ENCODE measurements at regions of chr11 and their contacts with region 1.

Region 1: DNA sequence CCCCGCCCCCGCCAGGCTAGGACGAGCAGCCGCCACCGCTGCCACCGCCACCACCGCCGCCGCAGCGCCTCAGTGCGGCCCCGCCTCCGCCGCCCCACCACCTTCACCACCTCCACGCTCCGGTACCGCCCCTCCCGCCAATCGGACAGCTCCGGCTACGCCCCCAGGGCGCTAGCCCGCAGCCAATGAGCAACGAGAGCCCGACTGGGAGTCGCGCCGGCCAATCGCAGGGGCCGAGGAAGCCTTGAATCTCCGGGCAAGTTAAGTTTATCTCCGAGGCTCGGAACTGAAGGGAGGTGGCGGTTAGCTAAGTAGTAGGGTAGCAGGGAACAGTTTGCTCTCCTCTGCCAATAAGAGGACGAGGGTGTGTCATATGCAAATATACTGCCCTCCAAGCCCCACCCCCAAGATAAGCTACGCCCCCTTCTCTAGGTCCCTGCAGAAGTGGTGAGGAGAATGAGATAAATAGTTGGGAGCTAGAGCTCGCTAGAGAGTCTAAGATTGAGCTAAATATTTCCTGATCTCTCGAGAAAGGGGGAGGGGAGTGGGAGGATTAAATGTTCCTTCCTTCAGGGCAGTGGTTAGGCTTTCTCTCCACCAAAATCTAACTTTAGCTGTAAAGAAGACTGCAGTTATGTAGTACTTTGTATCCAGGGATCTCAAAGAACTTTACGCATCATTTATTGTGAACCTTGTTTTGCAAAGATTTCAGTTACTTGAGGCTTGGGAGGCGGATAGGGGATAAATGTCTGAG is at the start of gene SESN3:
- DNase-seq: peak; percentile 96 to 99 (median 98)
- ATAC-seq: peak; percentile 88
- H3K4me3 ChIP-seq: peak within 1 kb of the TSS; percentile 82
- H3K4me3 Mint-ChIP-seq: peak within 1 kb of the TSS; percentile 98
- H3K27ac ChIP-seq: peak within 1 kb of the TSS; percentile 69 to 82
- H3K27ac Mint-ChIP-seq: peak within 1 kb of the TSS; percentile 89
- H3K4me1 ChIP-seq: peaks cover 16% of the 10 kb centered on the region
- H3K4me1 Mint-ChIP-seq: peaks cover 47% of the 10 kb centered on the region
- H3K27me3 ChIP-seq: no peaks in the 10 kb centered on the region
- H3K27me3 Mint-ChIP-seq: no peaks in the 10 kb centered on the region
- CTCF ChIP-seq: no peak
- total RNA-seq, gene SESN3: 63.9 to 69.1 TPM

Region 2: DNA sequence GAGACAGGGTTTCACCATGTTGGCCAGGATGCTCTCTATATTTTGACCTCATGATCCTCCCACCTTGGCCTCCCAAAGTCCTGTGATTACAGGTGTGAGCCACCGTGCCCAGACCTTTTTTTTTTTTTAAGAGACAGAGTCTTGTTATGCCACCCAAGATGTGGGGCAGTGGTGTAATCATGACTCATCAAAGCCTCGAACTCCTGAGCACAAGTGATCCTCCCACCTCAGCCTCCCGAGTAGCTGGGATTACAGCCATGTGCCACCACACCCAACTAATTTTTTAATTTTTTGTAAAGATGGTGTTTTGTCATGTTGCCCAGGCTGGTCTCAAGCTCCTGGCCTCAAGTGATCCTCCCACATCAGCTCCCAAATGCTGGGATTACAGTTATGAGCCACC is 889.1 kb before region 1 on chr11:
- CTCF ChIA-PET with region 1: no interaction called
- POLR2A ChIA-PET with region 1: no interaction called
- intact Hi-C with region 1: no loop called
- DNase-seq: no peak
- ATAC-seq: no peak
- H3K4me3 ChIP-seq: no peak overlapping the region
- H3K4me3 Mint-ChIP-seq: no peak overlapping the region
- H3K27ac ChIP-seq: no peak overlapping the region
- H3K27ac Mint-ChIP-seq: no peak overlapping the region
- H3K4me1 ChIP-seq: no peaks in the 10 kb centered on the region
- H3K4me1 Mint-ChIP-seq: no peaks in the 10 kb centered on the region
- H3K27me3 ChIP-seq: peaks cover 0 to 4% of the 10 kb centered on the region in 2 experiments
- H3K27me3 Mint-ChIP-seq: peaks cover 11% of the 10 kb centered on the region
- CTCF ChIP-seq: no peak

Region 3: DNA sequence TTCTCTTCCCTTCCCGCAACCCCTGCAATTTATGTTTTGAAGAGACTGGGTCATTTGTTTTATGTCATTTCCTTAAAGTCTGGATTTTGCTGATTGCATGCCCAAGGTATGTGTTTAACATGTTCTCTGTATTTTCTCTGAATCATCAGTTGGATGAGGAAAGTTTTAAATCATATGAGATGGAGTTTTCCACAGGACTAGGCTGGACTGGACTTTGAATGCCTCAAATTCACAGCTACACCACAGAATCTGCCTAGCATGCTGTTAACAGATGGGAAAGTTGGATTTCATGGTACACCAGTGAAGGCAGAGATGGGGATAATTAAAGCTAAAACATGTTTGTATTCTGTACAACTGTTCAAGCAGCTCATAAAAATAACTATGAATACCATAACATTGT is 320.5 kb before region 1 on chr11:
- CTCF ChIA-PET with region 1: no interaction called
- POLR2A ChIA-PET with region 1: no interaction called
- intact Hi-C with region 1: no loop called
- DNase-seq: no peak
- ATAC-seq: no peak
- H3K4me3 ChIP-seq: no peak overlapping the region
- H3K4me3 Mint-ChIP-seq: no peak overlapping the region
- H3K27ac ChIP-seq: no peak overlapping the region
- H3K27ac Mint-ChIP-seq: no peak overlapping the region
- H3K4me1 ChIP-seq: no peaks in the 10 kb centered on the region
- H3K4me1 Mint-ChIP-seq: no peaks in the 10 kb centered on the region
- H3K27me3 ChIP-seq: no peaks in the 10 kb centered on the region
- H3K27me3 Mint-ChIP-seq: no peaks in the 10 kb centered on the region
- CTCF ChIP-seq: no peak

Region 4: DNA sequence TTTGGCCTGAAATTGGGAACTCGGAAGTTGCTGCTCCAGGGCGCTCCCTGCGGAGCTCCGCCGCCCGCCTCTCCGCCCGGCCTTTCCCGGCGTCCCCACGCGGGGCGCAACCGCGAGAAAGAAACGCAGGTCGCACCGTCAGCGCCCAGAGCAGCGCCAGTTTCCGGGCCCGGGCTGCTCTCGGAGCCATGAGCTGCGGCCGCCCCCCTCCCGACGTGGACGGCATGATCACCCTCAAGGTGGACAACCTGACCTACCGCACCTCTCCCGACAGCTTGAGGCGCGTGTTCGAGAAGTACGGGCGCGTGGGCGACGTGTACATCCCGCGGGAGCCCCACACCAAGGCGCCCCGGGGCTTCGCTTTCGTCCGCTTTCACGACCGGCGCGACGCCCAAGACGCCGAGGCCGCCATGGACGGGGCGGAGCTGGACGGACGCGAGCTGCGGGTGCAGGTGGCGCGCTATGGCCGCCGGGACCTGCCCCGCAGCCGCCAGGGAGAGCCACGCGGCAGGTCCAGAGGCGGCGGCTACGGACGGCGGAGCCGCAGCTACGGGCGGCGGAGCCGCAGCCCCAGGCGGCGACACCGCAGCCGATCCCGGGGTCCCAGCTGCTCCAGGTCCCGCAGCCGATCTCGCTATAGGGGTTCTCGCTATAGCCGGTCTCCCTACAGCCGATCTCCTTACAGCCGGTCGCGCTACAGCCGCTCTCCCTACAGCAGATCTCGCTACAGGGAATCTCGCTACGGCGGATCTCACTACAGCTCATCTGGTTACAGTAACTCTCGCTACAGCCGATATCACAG is 164.1 kb before region 1 on chr11:
- CTCF ChIA-PET with region 1: interaction called, 4 read pairs
- POLR2A ChIA-PET with region 1: interaction called, 78 read pairs
- intact Hi-C with region 1: loop called in 1 of 2 experiments (anchors 2 kb)
- DNase-seq: peak; percentile 53 to 88 (median 69)
- ATAC-seq: peak; percentile 63
- H3K4me3 ChIP-seq: peak overlapping the region; percentile 95
- H3K4me3 Mint-ChIP-seq: peak overlapping the region; percentile 98
- H3K27ac ChIP-seq: peak overlapping the region; percentile 87 to 90
- H3K27ac Mint-ChIP-seq: peak overlapping the region; percentile 99
- H3K4me1 ChIP-seq: peaks cover 12% of the 10 kb centered on the region
- H3K4me1 Mint-ChIP-seq: peaks cover 38% of the 10 kb centered on the region
- H3K27me3 ChIP-seq: no peaks in the 10 kb centered on the region
- H3K27me3 Mint-ChIP-seq: no peaks in the 10 kb centered on the region
- CTCF ChIP-seq: peak; percentile 60

Region 5: GRCh38 chr11:95187723-95188122 is 43.6 kb before region 1 on chr11:
- CTCF ChIA-PET with region 1: no interaction called
- POLR2A ChIA-PET with region 1: interaction called, 4 read pairs
- intact Hi-C with region 1: loop called (anchors 5 kb)
- DNase-seq: no peak
- ATAC-seq: no peak
- H3K4me3 ChIP-seq: no peak overlapping the region
- H3K4me3 Mint-ChIP-seq: no peak overlapping the region
- H3K27ac ChIP-seq: no peak overlapping the region
- H3K27ac Mint-ChIP-seq: peak overlapping the region; percentile 14
- H3K4me1 ChIP-seq: no peaks in the 10 kb centered on the region
- H3K4me1 Mint-ChIP-seq: peaks cover 32% of the 10 kb centered on the region
- H3K27me3 ChIP-seq: no peaks in the 10 kb centered on the region
- H3K27me3 Mint-ChIP-seq: no peaks in the 10 kb centered on the region
- CTCF ChIP-seq: no peak

Region 6: GRCh38 chr11:95248666-95249467 is 17.6 kb after region 1 on chr11:
- CTCF ChIA-PET with region 1: interaction called, 13 read pairs
- POLR2A ChIA-PET with region 1: interaction called, 158 read pairs
- intact Hi-C with region 1: loop called (anchors 1 to 2 kb)
- DNase-seq: no peak
- ATAC-seq: no peak
- H3K4me3 ChIP-seq: no peak overlapping the region
- H3K4me3 Mint-ChIP-seq: no peak overlapping the region
- H3K27ac ChIP-seq: no peak overlapping the region
- H3K27ac Mint-ChIP-seq: no peak overlapping the region
- H3K4me1 ChIP-seq: peaks cover 4% of the 10 kb centered on the region
- H3K4me1 Mint-ChIP-seq: peaks cover 16% of the 10 kb centered on the region
- H3K27me3 ChIP-seq: no peaks in the 10 kb centered on the region
- H3K27me3 Mint-ChIP-seq: no peaks in the 10 kb centered on the region
- CTCF ChIP-seq: no peak

Region 7: GRCh38 chr11:95375886-95376285 is 144.6 kb after region 1 on chr11:
- CTCF ChIA-PET with region 1: no interaction called
- POLR2A ChIA-PET with region 1: interaction called, 6 read pairs
- intact Hi-C with region 1: loop called in 1 of 2 experiments (anchors 10 kb)
- DNase-seq: no peak
- ATAC-seq: no peak
- H3K4me3 ChIP-seq: no peak overlapping the region
- H3K4me3 Mint-ChIP-seq: no peak overlapping the region
- H3K27ac ChIP-seq: no peak overlapping the region
- H3K27ac Mint-ChIP-seq: no peak overlapping the region
- H3K4me1 ChIP-seq: no peaks in the 10 kb centered on the region
- H3K4me1 Mint-ChIP-seq: no peaks in the 10 kb centered on the region
- H3K27me3 ChIP-seq: no peaks in the 10 kb centered on the region
- H3K27me3 Mint-ChIP-seq: no peaks in the 10 kb centered on the region
- CTCF ChIP-seq: no peak

Region 8: DNA sequence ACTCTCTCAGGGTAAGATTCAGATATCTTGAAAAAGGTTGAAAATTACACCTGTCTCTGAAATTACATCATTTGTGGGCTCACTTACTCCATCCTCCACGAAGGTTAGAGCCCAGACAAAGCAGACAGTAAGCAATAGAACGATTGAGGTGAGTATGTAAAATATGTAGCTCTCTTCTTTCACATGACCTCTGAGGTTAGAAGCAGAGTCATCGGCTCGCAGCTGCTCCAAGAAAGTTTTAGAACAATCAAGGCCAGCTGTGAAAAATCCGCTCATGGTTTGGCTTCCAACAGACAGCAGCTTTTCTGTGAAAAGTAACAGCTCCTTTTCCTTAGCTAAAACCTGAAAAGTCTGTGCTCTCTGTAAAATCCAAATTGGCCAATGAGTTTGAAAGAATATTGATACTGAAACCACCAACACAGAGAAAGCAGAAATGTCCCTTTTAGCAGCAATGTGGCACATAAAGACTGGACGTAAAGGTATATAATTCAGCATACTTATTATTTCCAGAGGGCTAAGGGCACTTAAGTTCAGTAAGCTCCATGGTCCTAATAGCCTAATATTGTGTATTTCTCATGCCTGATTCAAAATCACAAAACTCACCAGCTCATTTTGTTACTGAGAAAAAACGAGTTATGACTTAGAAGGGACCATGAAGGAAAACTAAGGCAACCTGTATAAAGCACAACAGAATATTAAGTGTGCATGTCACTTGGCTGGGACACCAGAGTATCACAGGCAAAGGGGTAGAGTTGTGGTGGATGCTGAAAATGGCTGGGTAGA is 480.0 kb after region 1 on chr11:
- CTCF ChIA-PET with region 1: interaction called, 10 read pairs
- POLR2A ChIA-PET with region 1: interaction called, 12 read pairs
- intact Hi-C with region 1: no loop called
- DNase-seq: peak in 1 of 14 experiments; percentile 24
- ATAC-seq: peak; percentile 48
- H3K4me3 ChIP-seq: no peak overlapping the region
- H3K4me3 Mint-ChIP-seq: no peak overlapping the region
- H3K27ac ChIP-seq: no peak overlapping the region
- H3K27ac Mint-ChIP-seq: no peak overlapping the region
- H3K4me1 ChIP-seq: peaks cover 6% of the 10 kb centered on the region
- H3K4me1 Mint-ChIP-seq: peaks cover 14% of the 10 kb centered on the region
- H3K27me3 ChIP-seq: no peaks in the 10 kb centered on the region
- H3K27me3 Mint-ChIP-seq: peaks cover 6% of the 10 kb centered on the region
- CTCF ChIP-seq: no peak

Region 9: DNA sequence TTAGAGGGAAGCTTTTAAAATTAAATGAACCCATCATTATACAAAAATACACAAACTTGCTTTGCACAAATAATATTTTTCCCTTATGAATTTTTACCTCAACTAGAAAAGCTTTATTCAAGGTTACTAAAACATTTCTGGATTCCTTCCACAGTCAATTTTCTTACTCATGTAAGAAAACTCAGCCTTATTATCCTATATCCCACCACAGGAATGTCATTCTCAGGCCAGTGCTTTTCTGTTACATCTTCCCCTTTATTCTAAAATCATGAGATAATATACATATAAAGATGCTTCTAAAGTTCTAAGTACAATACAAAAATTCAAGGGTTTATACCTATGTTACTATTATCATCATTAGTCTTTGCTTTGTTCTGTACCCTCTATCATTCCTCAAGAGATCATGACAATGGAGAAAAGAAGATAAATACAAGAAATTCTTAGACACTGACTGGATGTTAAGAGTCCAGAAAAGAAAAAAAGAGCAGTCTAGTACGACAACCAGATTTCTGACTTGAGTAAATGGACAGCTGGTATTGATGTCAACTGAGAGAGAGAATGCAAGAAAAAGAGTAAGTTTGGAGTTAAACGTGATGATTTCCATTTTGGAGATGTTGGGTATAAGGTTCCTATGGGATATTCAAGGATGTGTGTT is 632.3 kb after region 1 on chr11:
- CTCF ChIA-PET with region 1: no interaction called
- POLR2A ChIA-PET with region 1: no interaction called
- intact Hi-C with region 1: no loop called
- DNase-seq: no peak
- ATAC-seq: no peak
- H3K4me3 ChIP-seq: no peak overlapping the region
- H3K4me3 Mint-ChIP-seq: no peak overlapping the region
- H3K27ac ChIP-seq: no peak overlapping the region
- H3K27ac Mint-ChIP-seq: no peak overlapping the region
- H3K4me1 ChIP-seq: no peaks in the 10 kb centered on the region
- H3K4me1 Mint-ChIP-seq: no peaks in the 10 kb centered on the region
- H3K27me3 ChIP-seq: no peaks in the 10 kb centered on the region
- H3K27me3 Mint-ChIP-seq: no peaks in the 10 kb centered on the region
- CTCF ChIP-seq: no peak

Measured in CD4-positive, alpha-beta T cell (primary cell).